ENCODE measurements at regions of chr1 and their contacts with region 1.

Region 1: GRCh38 chr1:6401673-6402072 is 8.1 kb upstream of the ACOT7 start:
- DNase-seq: no peak
- H3K4me3 ChIP-seq: no peak overlapping the region
- H3K27ac ChIP-seq: no peak overlapping the region
- H3K4me1 ChIP-seq: no peaks in the 10 kb centered on the region
- H3K27me3 ChIP-seq: peaks cover 0 to 4% (median 2%) of the 10 kb centered on the region in 4 experiments; a peak in 4 of 7 replicates
- CTCF ChIP-seq: no peak
- EP300 ChIP-seq: no peak
- POLR2A ChIP-seq: no peak
- RAD21 ChIP-seq: no peak

Region 2: DNA sequence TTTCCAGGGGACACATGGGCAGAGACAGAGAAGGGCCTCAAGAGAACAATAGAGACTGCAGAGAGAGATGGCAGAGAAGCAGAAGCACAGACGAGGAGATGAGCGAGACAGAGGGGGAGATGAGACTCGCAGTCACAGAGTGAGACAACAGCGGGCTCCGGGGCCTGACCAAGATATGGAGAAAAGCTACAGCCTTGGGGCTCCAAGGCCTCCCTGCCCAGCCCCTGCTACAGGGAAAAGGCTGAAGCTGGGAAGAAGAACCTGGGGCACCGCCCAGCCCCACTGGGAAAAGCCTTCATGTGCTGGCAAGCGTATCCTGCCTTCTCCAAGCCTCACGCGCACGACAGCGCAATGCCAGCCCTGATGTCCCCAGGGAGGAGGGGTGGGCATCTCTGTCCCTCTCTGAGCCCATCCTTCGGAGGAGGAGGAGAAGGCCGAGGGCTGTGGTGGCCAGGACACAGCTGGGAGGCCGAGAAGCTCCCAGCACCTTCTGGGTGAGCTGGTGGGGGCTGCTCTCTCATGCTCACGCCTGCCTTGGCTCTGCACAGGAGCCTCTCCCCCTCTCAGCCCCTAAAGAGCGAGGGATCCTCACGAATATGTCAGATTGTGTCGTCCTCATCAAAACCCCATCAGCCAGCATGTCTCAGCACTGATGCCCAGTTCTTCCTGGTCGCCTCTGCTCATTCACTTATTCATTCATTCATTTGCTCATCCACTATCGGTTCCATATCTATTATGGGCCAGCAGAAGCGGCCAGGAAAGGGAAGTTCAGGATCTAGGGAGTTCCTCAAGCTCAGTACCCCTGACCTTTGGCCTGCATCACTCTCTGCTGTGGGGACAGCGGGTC is 64.7 kb before region 1 on chr1:
- CTCF ChIA-PET with region 1: interaction called, 12 read pairs
- POLR2A ChIA-PET with region 1: no interaction called
- DNase-seq: no peak
- H3K4me3 ChIP-seq: no peak overlapping the region
- H3K27ac ChIP-seq: no peak overlapping the region
- H3K4me1 ChIP-seq: peaks cover 9 to 18% (median 13%) of the 10 kb centered on the region in 4 experiments; a peak in 6 of 7 replicates
- H3K27me3 ChIP-seq: no peaks in the 10 kb centered on the region
- CTCF ChIP-seq: no peak
- EP300 ChIP-seq: no peak
- POLR2A ChIP-seq: no peak
- RAD21 ChIP-seq: no peak

Region 3: DNA sequence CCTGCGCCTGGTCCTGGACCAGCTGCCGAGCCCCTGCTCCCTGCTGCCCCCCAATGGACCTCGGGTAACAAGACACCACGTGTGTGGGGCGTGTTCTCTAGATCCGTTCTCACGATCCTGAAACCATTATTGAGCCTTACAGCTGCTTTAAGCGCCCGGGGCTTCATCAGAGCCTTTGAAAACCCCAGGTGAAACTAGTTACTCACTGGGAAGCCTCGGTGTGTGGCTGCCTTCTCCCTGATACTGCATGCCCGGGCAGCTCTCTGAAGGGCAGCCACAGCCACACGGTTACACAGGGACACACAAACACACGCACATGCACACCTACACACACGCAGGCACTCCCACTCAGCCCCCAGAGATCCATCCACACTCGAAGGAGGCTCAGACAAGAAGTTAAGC is 12.8 kb after region 1 on chr1:
- CTCF ChIA-PET with region 1: interaction called, 113 read pairs
- POLR2A ChIA-PET with region 1: interaction called, 4 read pairs
- DNase-seq: peak in 1 of 2 experiments; percentile 86
- H3K4me3 ChIP-seq: no peak overlapping the region; a peak in 1 of 8 replicates
- H3K27ac ChIP-seq: no peak overlapping the region
- H3K4me1 ChIP-seq: peaks cover 2 to 10% (median 5%) of the 10 kb centered on the region in 4 experiments; a peak in 6 of 7 replicates
- H3K27me3 ChIP-seq: peaks cover 29 to 52% (median 50%) of the 10 kb centered on the region in 4 experiments
- CTCF ChIP-seq: peak; percentile 79 to 91 (median 88)
- EP300 ChIP-seq: peak in 1 of 2 experiments; percentile 72; a peak in 1 of 3 replicates
- POLR2A ChIP-seq: no peak
- RAD21 ChIP-seq: peak; percentile 43 to 66